ENCODE measurements at regions of chr5 and their contacts with region 1.

Region 1: DNA sequence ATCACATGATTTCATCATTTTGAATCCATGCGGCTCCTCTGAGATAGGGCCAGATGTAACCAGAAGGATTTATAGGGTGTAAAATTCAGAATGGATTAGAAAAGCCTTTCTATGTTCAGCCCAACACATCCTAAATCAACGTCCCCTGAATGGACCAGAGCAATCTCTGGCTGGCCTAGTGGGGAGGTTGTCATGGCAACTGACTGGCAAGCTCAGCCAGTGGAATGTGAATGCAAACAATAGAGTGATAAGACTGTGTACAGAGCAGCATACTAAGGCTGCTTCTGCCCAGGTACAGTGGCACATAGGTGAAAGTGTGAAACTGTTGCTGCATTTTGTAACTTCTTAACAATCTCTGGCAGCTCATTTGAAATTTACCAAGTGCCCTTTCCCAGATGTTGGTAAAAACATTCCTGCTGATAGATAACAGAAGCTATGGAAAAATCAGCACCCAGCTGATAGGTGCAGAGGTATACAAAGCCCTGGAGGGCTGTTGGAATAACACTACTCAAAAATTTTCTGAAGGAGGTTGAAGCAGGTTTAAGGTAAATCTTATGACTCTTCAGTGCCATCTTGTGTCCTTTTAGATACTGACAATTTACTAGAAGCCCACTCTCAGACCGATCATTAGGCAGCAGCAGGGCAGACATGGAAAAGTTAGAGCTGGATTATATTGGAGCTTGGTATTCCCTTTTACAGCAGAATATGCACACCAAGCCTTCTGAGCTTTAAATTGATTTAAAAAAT is 267.2 kb downstream of the RAB3C start:
- DNase-seq: no peak
- H3K4me3 Mint-ChIP-seq: no peak overlapping the region
- H3K27ac Mint-ChIP-seq: no peak overlapping the region
- H3K4me1 Mint-ChIP-seq: no peaks in the 10 kb centered on the region
- H3K27me3 Mint-ChIP-seq: peaks cover 3% of the 10 kb centered on the region

Region 2: GRCh38 chr5:58477760-58478376 is 372.2 kb before region 1 on chr5:
- CTCF ChIA-PET with region 1: interaction called, 23 read pairs
- POLR2A ChIA-PET with region 1: no interaction called
- intact Hi-C with region 1: loop called (anchors 2 kb)
- DNase-seq: no peak
- H3K4me3 Mint-ChIP-seq: no peak overlapping the region
- H3K27ac Mint-ChIP-seq: no peak overlapping the region
- H3K4me1 Mint-ChIP-seq: no peaks in the 10 kb centered on the region
- H3K27me3 Mint-ChIP-seq: peaks cover 5% of the 10 kb centered on the region

Region 3: DNA sequence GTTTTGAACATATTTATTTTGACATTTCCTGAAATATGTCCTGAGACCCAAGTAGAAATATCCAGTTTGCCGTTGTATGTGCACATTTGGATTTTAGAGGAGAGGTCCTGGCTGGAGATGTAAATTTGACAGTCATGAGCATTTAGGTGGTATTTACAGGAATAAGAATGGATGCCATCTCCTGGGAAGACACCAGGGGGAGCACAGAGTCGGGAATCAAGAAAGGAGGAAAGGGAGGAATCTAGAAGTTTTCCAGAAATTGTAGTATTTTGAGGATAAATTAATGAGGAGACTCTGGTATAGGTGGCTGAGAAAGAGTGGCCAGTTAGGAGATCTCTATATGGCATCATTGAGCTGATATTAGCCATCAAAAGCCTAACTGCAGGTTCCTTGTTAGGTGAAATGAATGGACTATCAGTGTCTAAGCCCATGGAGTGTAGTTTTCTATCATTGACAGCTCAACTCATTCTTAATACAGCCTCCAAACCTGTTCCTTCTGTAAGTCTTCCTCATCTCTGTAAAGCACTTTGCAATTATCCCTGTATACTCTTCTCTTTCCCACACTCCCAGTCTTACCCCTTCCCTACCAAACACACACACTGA is 351.7 kb before region 1 on chr5:
- CTCF ChIA-PET with region 1: interaction called, 25 read pairs
- POLR2A ChIA-PET with region 1: no interaction called
- intact Hi-C with region 1: no loop called
- DNase-seq: no peak
- H3K4me3 Mint-ChIP-seq: no peak overlapping the region
- H3K27ac Mint-ChIP-seq: no peak overlapping the region
- H3K4me1 Mint-ChIP-seq: peaks cover 2% of the 10 kb centered on the region
- H3K27me3 Mint-ChIP-seq: peaks cover 16% of the 10 kb centered on the region

Region 4: GRCh38 chr5:58834242-58835225 is 15.6 kb before region 1 on chr5:
- CTCF ChIA-PET with region 1: interaction called, 13 read pairs
- POLR2A ChIA-PET with region 1: no interaction called
- intact Hi-C with region 1: no loop called
- DNase-seq: no peak
- H3K4me3 Mint-ChIP-seq: no peak overlapping the region
- H3K27ac Mint-ChIP-seq: no peak overlapping the region
- H3K4me1 Mint-ChIP-seq: no peaks in the 10 kb centered on the region
- H3K27me3 Mint-ChIP-seq: peaks cover 5% of the 10 kb centered on the region

Region 5: DNA sequence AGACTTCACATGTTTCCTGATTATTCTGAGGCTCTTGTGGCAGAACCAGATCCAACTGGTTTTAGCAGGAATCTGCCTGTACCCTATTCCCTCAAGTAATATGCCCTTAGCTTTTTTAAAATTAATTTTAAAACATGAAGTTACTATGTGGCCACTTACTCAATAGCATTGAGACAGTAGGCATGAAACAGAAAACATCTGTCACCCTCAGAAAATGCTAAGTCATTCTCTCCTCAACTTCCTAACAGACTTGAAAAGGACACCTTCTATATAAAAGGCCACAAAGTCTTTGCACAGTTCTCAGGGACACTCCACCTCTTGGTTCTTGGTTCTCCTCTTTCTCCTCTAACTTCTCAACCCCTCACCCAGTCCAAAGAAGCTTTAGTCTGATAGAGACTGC is 10.6 kb after region 1 on chr5:
- CTCF ChIA-PET with region 1: interaction called, 18 read pairs
- POLR2A ChIA-PET with region 1: no interaction called
- intact Hi-C with region 1: no loop called
- DNase-seq: no peak
- H3K4me3 Mint-ChIP-seq: no peak overlapping the region
- H3K27ac Mint-ChIP-seq: no peak overlapping the region
- H3K4me1 Mint-ChIP-seq: peaks cover 5% of the 10 kb centered on the region
- H3K27me3 Mint-ChIP-seq: peaks cover 18% of the 10 kb centered on the region

Measured in activated CD4-positive, alpha-beta memory T cell treated with anti-CD3 and anti-CD28 coated beads for 36 hours (primary cell).